Cardiac septum (tissue), 1 donor: ENCODE measurements at regions of chr1 and their contacts with region 1.

Region 1: GRCh38 chr1:101820071-101820470 is 176.7 kb downstream of the OLFM3 start:
- DNase-seq: no peak

Region 2: GRCh38 chr1:101971304-101971703 is 151.2 kb after region 1 on chr1:
- intact Hi-C with region 1: loop called (anchors 10 kb)
- DNase-seq: no peak

Region 3: DNA sequence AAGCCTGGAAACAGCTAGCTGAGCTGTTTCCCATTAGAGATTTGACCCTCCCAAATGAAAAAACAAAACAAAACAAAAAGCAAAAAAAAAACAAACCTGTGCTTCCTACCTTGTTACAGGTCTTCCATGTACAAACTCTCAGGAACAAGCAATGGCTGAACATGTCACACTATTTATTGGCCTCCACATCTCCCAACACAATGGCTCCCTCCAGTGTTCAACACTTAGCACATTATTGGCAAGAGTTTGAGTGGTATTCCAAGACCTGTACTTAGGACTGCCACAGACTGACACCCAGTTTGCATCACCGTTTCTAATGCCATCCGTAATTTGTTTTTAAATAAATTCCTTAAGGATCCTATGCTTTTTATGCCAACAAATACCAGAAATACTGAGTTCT is 371.7 kb after region 1 on chr1:
- intact Hi-C with region 1: loop called (anchors 10 kb)
- DNase-seq: no peak